Spleen (tissue), 13 donors: ENCODE measurements at regions of chr9 and their contacts with region 1.

Region 1: DNA sequence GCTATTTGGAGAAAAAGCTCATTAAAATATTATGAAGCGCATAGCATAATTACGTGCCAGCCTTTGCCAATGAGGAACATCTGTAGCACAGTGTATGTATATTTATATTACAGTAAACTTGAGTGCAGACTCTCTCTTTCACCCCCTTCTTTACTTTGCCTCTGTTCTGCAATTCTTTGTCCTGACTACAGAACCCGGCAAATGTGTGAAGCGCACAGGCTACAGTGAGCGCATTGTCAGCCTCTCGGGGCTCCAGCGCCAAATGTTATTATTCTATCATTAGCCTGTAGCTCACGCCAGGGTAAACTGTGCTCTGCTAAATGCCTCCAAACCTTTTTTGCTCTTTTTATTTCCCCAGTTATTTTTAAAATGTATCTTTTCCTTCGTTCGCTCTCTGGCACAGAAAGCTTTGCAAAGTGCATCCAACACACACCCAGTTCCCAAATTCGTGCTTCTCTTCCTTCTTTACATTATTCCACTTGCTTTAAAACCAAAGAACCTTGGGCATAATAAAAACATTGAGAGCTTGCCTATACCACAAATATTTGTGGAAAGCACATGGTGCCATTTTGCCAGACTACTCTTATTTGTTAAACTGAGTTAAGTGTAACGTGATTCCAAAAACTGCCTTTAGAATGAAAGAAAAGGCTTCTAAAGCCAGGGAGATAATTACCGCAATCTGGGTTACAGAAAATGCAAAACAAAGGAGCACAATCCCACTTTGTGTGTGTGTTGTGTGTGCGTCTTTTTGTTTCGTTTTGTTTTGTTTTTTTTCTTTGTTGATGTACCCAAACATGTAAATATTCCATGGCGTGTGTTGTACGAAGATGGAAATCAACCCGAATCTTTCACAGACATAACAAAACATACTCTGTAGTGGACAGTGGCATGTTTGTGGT is 164.1 kb upstream of the MPDZ start:
- DNase-seq: no peak
- H3K4me3 ChIP-seq: no peak overlapping the region
- H3K27ac ChIP-seq: no peak overlapping the region
- H3K4me1 ChIP-seq: peaks cover 0 to 12% (median 4%) of the 10 kb centered on the region in 6 donors
- H3K27me3 ChIP-seq: no peaks in the 10 kb centered on the region
- CTCF ChIP-seq: no peak
- POLR2A ChIP-seq: no peak

Region 2: GRCh38 chr9:13524245-13524644 is 80.7 kb after region 1 on chr9:
- intact Hi-C with region 1: no loop called
- DNase-seq: no peak
- H3K4me3 ChIP-seq: no peak overlapping the region
- H3K27ac ChIP-seq: no peak overlapping the region
- H3K4me1 ChIP-seq: no peaks in the 10 kb centered on the region
- H3K27me3 ChIP-seq: no peaks in the 10 kb centered on the region
- CTCF ChIP-seq: no peak
- POLR2A ChIP-seq: no peak

Region 3: DNA sequence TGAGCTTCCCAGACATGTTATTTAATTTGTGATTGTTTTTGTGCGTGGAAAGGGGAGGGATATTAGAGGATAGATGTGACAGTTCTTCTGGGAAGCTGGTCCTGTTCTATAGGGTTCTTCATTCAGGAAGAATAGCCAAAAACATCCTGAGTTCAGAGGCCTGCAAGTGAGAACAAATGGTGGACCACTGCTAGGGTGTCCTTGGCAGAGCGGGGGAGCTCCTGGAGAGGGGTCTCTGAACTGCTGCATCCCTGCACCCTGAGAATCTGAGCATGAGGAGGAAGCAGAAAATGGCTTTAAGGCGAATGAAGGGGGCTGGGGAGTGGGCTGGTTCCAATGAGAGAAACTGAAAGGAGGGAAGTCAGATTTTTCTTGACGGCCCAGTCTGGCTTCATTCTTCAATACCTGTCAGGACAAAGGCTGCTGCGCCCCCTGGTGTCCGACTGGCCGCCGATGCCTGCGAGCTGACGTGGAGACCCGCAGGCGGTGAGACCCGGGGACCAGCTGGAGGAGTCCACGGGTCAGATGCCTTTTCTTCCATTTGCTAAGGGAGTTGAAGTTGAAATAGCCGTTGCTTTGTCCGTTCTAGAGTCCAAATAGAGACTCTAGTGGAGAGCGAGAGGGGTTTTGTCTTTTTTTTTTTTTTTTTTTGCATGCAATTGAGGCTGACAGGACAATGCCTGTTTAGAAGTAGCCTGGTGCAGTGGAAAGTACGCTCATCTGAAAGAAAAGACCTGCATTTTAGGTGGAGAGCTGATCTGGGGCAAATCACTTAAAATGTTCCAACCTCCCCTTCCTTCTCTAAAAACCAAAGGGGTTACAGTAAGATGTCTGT is 909.8 kb after region 1 on chr9:
- intact Hi-C with region 1: loop called (anchors 5 kb)
- DNase-seq: peak; percentile 92
- H3K4me3 ChIP-seq: peak overlapping the region in 2 of 8 donors; percentile 8 to 9
- H3K27ac ChIP-seq: no peak overlapping the region
- H3K4me1 ChIP-seq: peaks cover 0 to 28% (median 12%) of the 10 kb centered on the region in 6 donors
- H3K27me3 ChIP-seq: peaks cover 3 to 64% (median 26%) of the 10 kb centered on the region in 7 donors
- CTCF ChIP-seq: peak; percentile 51 to 86 (median 82)
- POLR2A ChIP-seq: no peak